Caco-2 (cell line): ENCODE measurements at regions of chr17 and their contacts with region 1.

Region 1: GRCh38 chr17:35747540-35748017 is 5.5 kb downstream of the GAS2L2 start:
- DNase-seq: peak; percentile 72 to 83
- H3K4me3 ChIP-seq: no peak overlapping the region
- H3K4me3 Mint-ChIP-seq: no peak overlapping the region
- H3K27ac Mint-ChIP-seq: no peak overlapping the region
- H3K4me1 ChIP-seq: peaks cover 4% of the 10 kb centered on the region; the same call in 1 of the 2 replicates
- H3K4me1 Mint-ChIP-seq: no peaks in the 10 kb centered on the region
- H3K27me3 ChIP-seq: no peaks in the 10 kb centered on the region
- H3K27me3 Mint-ChIP-seq: peaks cover 9% of the 10 kb centered on the region
- CTCF ChIP-seq: peak; percentile 89 to 91

Region 2: GRCh38 chr17:35312790-35313711 is 434.5 kb before region 1 on chr17:
- CTCF ChIA-PET with region 1: no interaction called
- POLR2A ChIA-PET with region 1: no interaction called
- intact Hi-C with region 1: loop called (anchors 5 kb)
- DNase-seq: peak in 1 of 2 experiments; percentile 59
- H3K4me3 ChIP-seq: no peak overlapping the region
- H3K4me3 Mint-ChIP-seq: no peak overlapping the region
- H3K27ac Mint-ChIP-seq: no peak overlapping the region
- H3K4me1 ChIP-seq: no peaks in the 10 kb centered on the region; the same call in 1 of the 2 replicates
- H3K4me1 Mint-ChIP-seq: no peaks in the 10 kb centered on the region
- H3K27me3 ChIP-seq: no peaks in the 10 kb centered on the region
- H3K27me3 Mint-ChIP-seq: peaks cover 3% of the 10 kb centered on the region
- CTCF ChIP-seq: peak; percentile 72 to 80

Region 3: GRCh38 chr17:35555695-35556094 is 191.9 kb before region 1 on chr17:
- CTCF ChIA-PET with region 1: interaction called, 10 read pairs
- POLR2A ChIA-PET with region 1: no interaction called
- intact Hi-C with region 1: no loop called
- DNase-seq: peak in 1 of 2 experiments; percentile 28
- H3K4me3 ChIP-seq: no peak overlapping the region
- H3K4me3 Mint-ChIP-seq: no peak overlapping the region
- H3K27ac Mint-ChIP-seq: no peak overlapping the region
- H3K4me1 ChIP-seq: no peaks in the 10 kb centered on the region
- H3K4me1 Mint-ChIP-seq: no peaks in the 10 kb centered on the region
- H3K27me3 ChIP-seq: no peaks in the 10 kb centered on the region; the same call in 1 of the 2 replicates
- H3K27me3 Mint-ChIP-seq: peaks cover 19% of the 10 kb centered on the region
- CTCF ChIP-seq: peak; percentile 23 to 50

Region 4: GRCh38 chr17:35612924-35613521 is 134.6 kb before region 1 on chr17:
- CTCF ChIA-PET with region 1: interaction called, 41 read pairs
- POLR2A ChIA-PET with region 1: interaction called, 4 read pairs
- intact Hi-C with region 1: loop called (anchors 1 kb)
- DNase-seq: peak in 1 of 2 experiments; percentile 67
- H3K4me3 ChIP-seq: no peak overlapping the region
- H3K4me3 Mint-ChIP-seq: no peak overlapping the region
- H3K27ac Mint-ChIP-seq: no peak overlapping the region
- H3K4me1 ChIP-seq: no peaks in the 10 kb centered on the region; the same call in 1 of the 2 replicates
- H3K4me1 Mint-ChIP-seq: no peaks in the 10 kb centered on the region
- H3K27me3 ChIP-seq: no peaks in the 10 kb centered on the region
- H3K27me3 Mint-ChIP-seq: no peaks in the 10 kb centered on the region
- CTCF ChIP-seq: peak; percentile 78 to 79

Region 5: DNA sequence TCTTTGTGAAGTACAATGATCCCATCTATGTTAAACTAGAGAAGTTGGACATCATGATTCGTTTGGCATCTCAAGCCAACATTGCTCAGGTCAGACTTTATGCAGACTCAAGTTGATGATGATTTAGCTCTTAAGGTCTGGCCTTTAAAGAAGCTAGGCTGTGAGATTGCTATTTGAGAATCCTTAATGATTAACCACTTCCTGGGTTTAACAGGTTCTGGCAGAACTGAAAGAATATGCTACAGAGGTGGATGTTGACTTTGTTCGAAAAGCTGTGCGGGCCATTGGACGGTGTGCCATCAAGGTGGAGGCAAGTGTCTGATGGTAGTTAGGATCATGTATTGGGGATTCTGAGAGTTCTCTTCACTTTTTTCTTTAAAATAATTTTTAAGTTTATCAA is 120.2 kb before region 1 on chr17:
- CTCF ChIA-PET with region 1: interaction called, 5 read pairs
- POLR2A ChIA-PET with region 1: no interaction called
- intact Hi-C with region 1: loop called (anchors 5 kb)
- DNase-seq: peak; percentile 40 to 50
- H3K4me3 ChIP-seq: no peak overlapping the region
- H3K4me3 Mint-ChIP-seq: peak overlapping the region; percentile 30
- H3K27ac Mint-ChIP-seq: peak overlapping the region; percentile 66
- H3K4me1 ChIP-seq: peaks cover 22% of the 10 kb centered on the region
- H3K4me1 Mint-ChIP-seq: peaks cover 19% of the 10 kb centered on the region
- H3K27me3 ChIP-seq: no peaks in the 10 kb centered on the region
- H3K27me3 Mint-ChIP-seq: no peaks in the 10 kb centered on the region
- CTCF ChIP-seq: no peak

Region 6: GRCh38 chr17:35731239-35731931 is 16.2 kb before region 1 on chr17 and contains the start of gene RASL10B:
- CTCF ChIA-PET with region 1: interaction called, 18 read pairs
- POLR2A ChIA-PET with region 1: no interaction called
- intact Hi-C with region 1: no loop called
- DNase-seq: peak; percentile 83 to 84
- H3K4me3 ChIP-seq: peak within 1 kb of the TSS; percentile 46
- H3K4me3 Mint-ChIP-seq: peak within 1 kb of the TSS; percentile 75
- H3K27ac Mint-ChIP-seq: peak within 1 kb of the TSS; percentile 58
- H3K4me1 ChIP-seq: peaks cover 7% of the 10 kb centered on the region
- H3K4me1 Mint-ChIP-seq: peaks cover 9% of the 10 kb centered on the region
- H3K27me3 ChIP-seq: no peaks in the 10 kb centered on the region
- H3K27me3 Mint-ChIP-seq: no peaks in the 10 kb centered on the region
- CTCF ChIP-seq: no peak
- total RNA-seq, gene RASL10B: 11.4 and 13.3 TPM in 2 replicates